ENCODE measurements at regions of chr20 and their contacts with region 1.

Region 1: GRCh38 chr20:13819885-13820645 is 35.2 kb downstream of the NDUFAF5 start:
- DNase-seq: peak; percentile 73
- ATAC-seq: peak; percentile 67 to 79; a peak in 5 of 6 replicates
- H3K4me3 ChIP-seq: no peak overlapping the region
- H3K27ac ChIP-seq: no peak overlapping the region
- H3K4me1 ChIP-seq: 0 out of 3 replicates have a peak, but pooled peaks cover 3% of the 10 kb centered on the region
- CTCF ChIP-seq: peak; percentile 72
- EP300 ChIP-seq: no peak
- POLR2A ChIP-seq: no peak
- RAD21 ChIP-seq: peak; percentile 57

Region 2: DNA sequence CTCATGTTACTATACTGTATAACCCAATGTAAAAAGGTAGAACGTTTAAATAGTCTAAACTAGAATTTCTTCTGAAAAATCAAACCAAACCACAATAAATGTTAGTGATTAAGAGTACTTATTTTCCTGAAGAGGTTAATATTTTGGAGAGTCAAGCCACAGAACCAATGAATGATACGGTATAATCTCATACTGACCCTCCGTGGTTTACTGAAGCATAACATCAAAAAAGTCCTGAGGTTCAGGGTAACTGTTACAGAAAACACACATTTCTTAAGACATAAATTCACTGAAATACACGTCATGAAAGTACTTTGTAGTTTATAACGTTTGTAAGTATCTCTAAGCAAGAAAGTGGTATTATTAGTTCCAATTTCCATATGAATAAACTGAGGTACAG is 64.3 kb before region 1 on chr20:
- CTCF ChIA-PET with region 1: no interaction called
- POLR2A ChIA-PET with region 1: no interaction called
- DNase-seq: no peak
- ATAC-seq: no peak
- H3K4me3 ChIP-seq: no peak overlapping the region
- H3K27ac ChIP-seq: no peak overlapping the region
- H3K4me1 ChIP-seq: no peaks in the 10 kb centered on the region
- CTCF ChIP-seq: no peak
- EP300 ChIP-seq: no peak
- POLR2A ChIP-seq: no peak
- RAD21 ChIP-seq: no peak

Region 3: DNA sequence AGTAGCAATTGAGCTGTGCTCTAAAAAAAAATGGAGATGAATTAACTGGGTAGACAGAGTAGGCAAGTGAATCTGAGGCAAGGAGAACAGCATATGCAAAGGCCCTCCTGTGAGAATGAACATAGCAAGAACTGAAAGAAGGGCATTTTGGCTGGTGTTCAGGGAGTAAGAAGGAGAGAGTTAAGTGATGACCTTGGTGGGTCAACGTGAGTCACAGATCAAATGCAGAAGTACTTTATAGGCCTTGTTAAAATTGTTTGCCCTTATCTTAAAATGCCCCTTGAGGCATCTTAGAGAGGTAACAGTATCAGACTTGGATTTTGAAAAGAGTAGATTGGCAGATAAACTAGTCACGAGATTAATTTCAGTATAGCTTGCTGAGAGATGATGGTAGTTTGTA is 10.7 kb before region 1 on chr20:
- CTCF ChIA-PET with region 1: interaction called, 13 read pairs
- POLR2A ChIA-PET with region 1: no interaction called
- DNase-seq: no peak
- ATAC-seq: no peak
- H3K4me3 ChIP-seq: no peak overlapping the region
- H3K27ac ChIP-seq: no peak overlapping the region
- H3K4me1 ChIP-seq: no peaks in the 10 kb centered on the region
- CTCF ChIP-seq: no peak
- EP300 ChIP-seq: no peak
- POLR2A ChIP-seq: no peak
- RAD21 ChIP-seq: no peak

Region 4: DNA sequence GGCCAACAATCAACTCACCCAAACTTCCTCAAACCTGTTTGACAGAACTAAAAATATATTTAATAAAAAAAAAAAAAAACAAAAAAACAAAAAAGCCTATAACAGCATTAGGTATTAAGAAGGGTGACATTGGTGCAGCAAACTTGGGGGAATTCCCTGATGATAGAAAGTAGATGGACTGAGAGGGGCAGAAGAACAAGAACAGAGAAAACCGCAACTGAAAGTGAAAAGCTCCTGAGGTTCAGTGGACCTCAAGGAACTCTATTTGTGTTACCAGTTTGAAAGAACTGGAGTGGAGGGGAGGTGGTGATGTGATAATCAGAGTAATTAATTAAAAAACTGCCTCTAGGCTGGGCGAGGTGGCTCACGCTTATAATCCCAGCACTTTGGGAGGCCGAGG is 229.0 kb after region 1 on chr20:
- CTCF ChIA-PET with region 1: interaction called, 38 read pairs
- POLR2A ChIA-PET with region 1: interaction called, 3 read pairs
- DNase-seq: no peak
- ATAC-seq: no peak
- H3K4me3 ChIP-seq: no peak overlapping the region
- H3K27ac ChIP-seq: no peak overlapping the region
- H3K4me1 ChIP-seq: no peaks in the 10 kb centered on the region
- CTCF ChIP-seq: no peak
- EP300 ChIP-seq: no peak
- POLR2A ChIP-seq: no peak
- RAD21 ChIP-seq: no peak

Region 5: GRCh38 chr20:14055127-14055742 is 235.2 kb after region 1 on chr20:
- CTCF ChIA-PET with region 1: interaction called, 38 read pairs
- POLR2A ChIA-PET with region 1: interaction called, 3 read pairs
- DNase-seq: peak; percentile 20 to 76
- ATAC-seq: peak; percentile 60 to 74; a peak in 4 of 6 replicates
- H3K4me3 ChIP-seq: no peak overlapping the region
- H3K27ac ChIP-seq: no peak overlapping the region
- H3K4me1 ChIP-seq: no peaks in the 10 kb centered on the region
- CTCF ChIP-seq: peak; percentile 92
- EP300 ChIP-seq: no peak
- POLR2A ChIP-seq: no peak
- RAD21 ChIP-seq: peak; percentile 86 to 88

Region 6: GRCh38 chr20:14393659-14394058 is 573.6 kb after region 1 on chr20:
- CTCF ChIA-PET with region 1: no interaction called
- POLR2A ChIA-PET with region 1: no interaction called
- DNase-seq: no peak
- ATAC-seq: no peak
- H3K4me3 ChIP-seq: no peak overlapping the region
- H3K27ac ChIP-seq: no peak overlapping the region
- H3K4me1 ChIP-seq: no peaks in the 10 kb centered on the region
- CTCF ChIP-seq: no peak
- EP300 ChIP-seq: no peak
- POLR2A ChIP-seq: no peak
- RAD21 ChIP-seq: no peak